Dorsolateral prefrontal cortex (tissue), 120 donors: ENCODE measurements at regions of chr16 and their contacts with region 1.

Region 1: GRCh38 chr16:425082-425718 is at the start of gene RAB11FIP3:
- DNase-seq: peak; percentile 75 to 93 (median 88)
- H3K4me3 ChIP-seq: peak within 1 kb of the TSS; percentile 66 to 95 (median 82)
- H3K27ac ChIP-seq: peak within 1 kb of the TSS; percentile 70 to 98 (median 92)
- H3K27me3 ChIP-seq: no peaks in the 10 kb centered on the region
- CTCF ChIP-seq: peak in 53 of 56 donors; percentile 10 to 72 (median 46)
- total RNA-seq, gene RAB11FIP3: 84.7 to 179 (median 116) TPM

Region 2: GRCh38 chr16:265711-266110 is 159.5 kb before region 1 on chr16:
- intact Hi-C with region 1: no loop called
- DNase-seq: no peak
- H3K4me3 ChIP-seq: no peak overlapping the region
- H3K27ac ChIP-seq: no peak overlapping the region
- H3K27me3 ChIP-seq: no peaks in the 10 kb centered on the region
- CTCF ChIP-seq: no peak

Region 3: GRCh38 chr16:339680-340079 is 85.5 kb before region 1 on chr16:
- intact Hi-C with region 1: no loop called
- DNase-seq: no peak
- H3K4me3 ChIP-seq: no peak overlapping the region
- H3K27ac ChIP-seq: peak overlapping the region in 1 of 59 donors; percentile 29
- H3K27me3 ChIP-seq: no peaks in the 10 kb centered on the region
- CTCF ChIP-seq: no peak

Region 4: GRCh38 chr16:471353-472198 is 46.4 kb after region 1 on chr16:
- intact Hi-C with region 1: loop called (anchors 2 to 5 kb)
- DNase-seq: peak; percentile 77 to 95 (median 92)
- H3K4me3 ChIP-seq: peak overlapping the region in 50 of 59 donors; percentile 0 to 59 (median 39)
- H3K27ac ChIP-seq: peak overlapping the region in 58 of 59 donors; percentile 53 to 96 (median 87)
- H3K27me3 ChIP-seq: no peaks in the 10 kb centered on the region
- CTCF ChIP-seq: peak in 9 of 56 donors; percentile 1 to 39 (median 15)

Region 5: DNA sequence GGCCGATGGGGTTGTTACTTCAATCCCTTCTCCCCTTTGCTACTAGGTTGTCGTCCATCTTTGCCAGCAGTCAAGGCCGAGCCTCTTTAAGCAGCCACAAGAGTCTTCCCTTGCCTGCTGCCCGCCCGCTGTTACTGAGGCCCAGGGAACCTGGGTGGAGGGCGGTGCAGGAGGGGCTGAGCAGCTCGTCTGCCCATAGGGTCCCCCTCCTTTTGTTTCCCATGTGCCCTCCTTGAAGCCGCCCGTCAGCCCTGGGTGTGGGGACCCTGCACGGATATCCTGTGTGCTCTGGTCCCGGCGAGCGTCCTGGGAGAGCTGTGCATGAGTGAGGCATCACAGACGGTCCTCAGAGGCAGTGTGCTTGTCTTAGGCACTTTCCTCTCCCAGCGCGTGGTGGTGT is 64.4 kb after region 1 on chr16:
- intact Hi-C with region 1: loop called in 1 of 2 experiments (anchors 5 kb)
- DNase-seq: no peak
- H3K4me3 ChIP-seq: no peak overlapping the region
- H3K27ac ChIP-seq: no peak overlapping the region
- H3K27me3 ChIP-seq: no peaks in the 10 kb centered on the region
- CTCF ChIP-seq: no peak